Aorta (tissue), 5 donors: ENCODE measurements at regions of chr21 and their contacts with region 1.

Region 1: GRCh38 chr21:42539931-42540343 is 26.3 kb downstream of the SLC37A1 start:
- DNase-seq: peak in 1 of 2 donors; percentile 12
- ATAC-seq: no peak
- H3K4me3 ChIP-seq: no peak overlapping the region
- H3K27ac ChIP-seq: no peak overlapping the region
- H3K4me1 ChIP-seq: no peaks in the 10 kb centered on the region
- H3K27me3 ChIP-seq: no peaks in the 10 kb centered on the region

Region 2: GRCh38 chr21:42467140-42467983 is 72.6 kb before region 1 on chr21:
- intact Hi-C with region 1: loop called in 1 of 2 experiments (anchors 10 kb)
- DNase-seq: no peak
- ATAC-seq: no peak
- H3K4me3 ChIP-seq: no peak overlapping the region
- H3K27ac ChIP-seq: no peak overlapping the region
- H3K4me1 ChIP-seq: no peaks in the 10 kb centered on the region
- H3K27me3 ChIP-seq: no peaks in the 10 kb centered on the region